Vagina (tissue), 2 donors: ENCODE measurements at regions of chr20 and their contacts with region 1.

Region 1: DNA sequence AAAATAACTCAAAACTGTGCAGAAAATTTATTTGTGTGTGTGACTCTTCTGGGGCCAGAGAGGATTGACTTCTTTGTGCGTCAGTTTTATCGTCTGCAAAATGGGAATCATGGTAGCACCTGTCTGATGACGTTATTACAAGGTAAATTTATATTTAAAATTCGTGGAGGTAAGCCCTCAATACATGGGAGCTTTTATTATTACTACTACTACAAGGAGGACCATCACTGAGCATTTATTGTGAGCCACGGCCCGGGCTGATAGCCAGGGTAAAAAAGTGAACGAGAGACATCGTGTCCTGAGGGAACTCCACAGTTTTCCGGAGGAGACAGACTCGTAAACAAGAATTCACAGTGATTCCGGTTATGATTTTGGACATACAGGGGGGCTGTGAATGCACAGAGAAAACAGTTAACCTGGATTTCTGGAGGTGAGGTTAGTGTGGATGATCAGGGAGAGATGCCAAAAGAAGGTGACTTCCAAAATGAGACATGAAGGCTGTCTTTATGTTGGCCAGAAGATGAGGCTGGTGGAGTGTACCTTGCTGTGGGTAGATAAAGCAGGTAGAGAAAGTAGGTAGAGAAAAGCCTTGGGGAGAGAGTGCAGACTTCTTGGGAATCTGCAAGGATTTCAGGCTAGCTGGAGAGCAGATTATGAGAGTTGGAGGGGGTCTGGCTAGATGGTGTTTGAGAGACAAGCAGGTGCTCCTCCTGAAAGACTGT is 10.6 kb upstream of the SERINC3 start:
- DNase-seq: no peak
- H3K4me3 ChIP-seq: peak overlapping the region; percentile 75 to 83
- H3K27ac ChIP-seq: peak overlapping the region; percentile 86
- H3K4me1 ChIP-seq: peaks cover 28% of the 10 kb centered on the region
- H3K27me3 ChIP-seq: no peaks in the 10 kb centered on the region
- CTCF ChIP-seq: no peak
- POLR2A ChIP-seq: no peak

Region 2: DNA sequence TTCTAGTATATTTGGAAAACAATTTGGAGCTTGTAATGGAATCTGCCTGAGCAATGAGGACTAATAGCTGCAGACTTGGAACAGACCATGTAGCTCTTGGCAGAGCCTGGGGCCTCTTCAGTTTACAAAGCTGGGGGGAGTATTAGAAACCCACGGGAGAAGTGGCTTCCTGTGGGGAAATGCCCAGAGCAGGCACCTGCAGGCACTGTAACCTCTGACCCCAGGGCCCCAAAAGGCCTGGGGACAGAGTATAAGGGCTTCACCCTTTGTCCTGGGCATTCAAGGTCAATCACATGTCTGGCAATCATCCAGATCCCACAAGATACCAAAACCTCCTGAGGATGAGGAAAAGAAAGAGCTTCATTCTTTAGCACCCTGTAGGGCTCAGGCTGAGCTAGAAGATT is 69.4 kb after region 1 on chr20:
- intact Hi-C with region 1: loop called (anchors 5 kb)
- DNase-seq: no peak
- H3K4me3 ChIP-seq: no peak overlapping the region
- H3K27ac ChIP-seq: peak overlapping the region; percentile 98
- H3K4me1 ChIP-seq: peaks cover 68% of the 10 kb centered on the region
- H3K27me3 ChIP-seq: no peaks in the 10 kb centered on the region
- CTCF ChIP-seq: no peak
- POLR2A ChIP-seq: no peak

Region 3: DNA sequence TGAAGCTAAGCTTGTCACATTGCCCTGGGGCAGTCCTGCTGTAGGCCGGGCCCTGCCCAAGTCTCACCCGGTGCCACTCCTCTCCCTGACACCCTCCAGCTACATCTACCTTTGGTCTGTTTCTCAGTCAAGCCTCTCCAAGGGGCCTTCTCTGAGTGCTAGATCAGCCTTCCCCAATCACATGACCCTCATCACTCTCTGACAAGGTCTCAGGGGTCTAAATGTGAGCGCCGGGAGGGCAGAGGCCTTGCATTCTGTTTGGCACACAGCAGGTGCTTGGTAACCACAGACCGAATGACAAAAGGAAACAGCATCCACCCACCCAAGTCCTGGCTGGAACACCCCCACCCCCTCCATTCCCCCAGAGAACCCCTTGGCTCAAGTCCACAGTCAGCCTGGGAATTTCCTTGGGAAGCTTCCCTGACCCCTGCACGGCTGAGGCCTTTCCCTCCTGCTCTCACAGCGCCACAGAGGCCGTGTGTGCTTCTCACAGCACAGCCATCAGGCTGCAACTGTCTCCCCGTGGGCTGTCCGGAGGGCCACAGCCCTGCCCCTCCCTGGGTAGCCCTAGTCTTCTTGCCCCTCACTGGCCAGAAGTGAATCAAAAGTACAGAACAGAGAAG is 82.9 kb after region 1 on chr20:
- intact Hi-C with region 1: loop called (anchors 5 kb)
- DNase-seq: no peak
- H3K4me3 ChIP-seq: no peak overlapping the region
- H3K27ac ChIP-seq: peak overlapping the region; percentile 51
- H3K4me1 ChIP-seq: peaks cover 48% of the 10 kb centered on the region
- H3K27me3 ChIP-seq: no peaks in the 10 kb centered on the region
- CTCF ChIP-seq: no peak
- POLR2A ChIP-seq: no peak